Naive thymus-derived CD4-positive, alpha-beta T cell (primary cell): ENCODE measurements at regions of chr7 and their contacts with region 1.

Region 1: GRCh38 chr7:114026486-114027089 is 107.8 kb upstream of the PPP1R3A start:
- DNase-seq: peak in 7 of 9 donors; percentile 10 to 60 (median 44)
- ATAC-seq: peak; percentile 54
- H3K4me3 ChIP-seq: no peak overlapping the region
- H3K4me3 Mint-ChIP-seq: no peak overlapping the region
- H3K27ac ChIP-seq: no peak overlapping the region
- H3K27ac Mint-ChIP-seq: no peak overlapping the region
- H3K4me1 ChIP-seq: no peaks in the 10 kb centered on the region
- H3K4me1 Mint-ChIP-seq: no peaks in the 10 kb centered on the region
- H3K27me3 ChIP-seq: peaks cover 0 to 4% of the 10 kb centered on the region in 2 donors
- H3K27me3 Mint-ChIP-seq: peaks cover 0 to 9% (median 0%) of the 10 kb centered on the region in 5 donors

Region 2: GRCh38 chr7:114663502-114663901 is 636.9 kb after region 1 on chr7:
- CTCF ChIA-PET with region 1: no interaction called
- POLR2A ChIA-PET with region 1: no interaction called
- intact Hi-C with region 1: loop called in 1 of 2 experiments (anchors 10 kb)
- DNase-seq: no peak
- ATAC-seq: no peak
- H3K4me3 ChIP-seq: no peak overlapping the region
- H3K4me3 Mint-ChIP-seq: no peak overlapping the region
- H3K27ac ChIP-seq: no peak overlapping the region
- H3K27ac Mint-ChIP-seq: no peak overlapping the region
- H3K4me1 ChIP-seq: no peaks in the 10 kb centered on the region
- H3K4me1 Mint-ChIP-seq: no peaks in the 10 kb centered on the region
- H3K27me3 ChIP-seq: no peaks in the 10 kb centered on the region
- H3K27me3 Mint-ChIP-seq: peaks cover 0 to 4% (median 0%) of the 10 kb centered on the region in 5 donors

Region 3: DNA sequence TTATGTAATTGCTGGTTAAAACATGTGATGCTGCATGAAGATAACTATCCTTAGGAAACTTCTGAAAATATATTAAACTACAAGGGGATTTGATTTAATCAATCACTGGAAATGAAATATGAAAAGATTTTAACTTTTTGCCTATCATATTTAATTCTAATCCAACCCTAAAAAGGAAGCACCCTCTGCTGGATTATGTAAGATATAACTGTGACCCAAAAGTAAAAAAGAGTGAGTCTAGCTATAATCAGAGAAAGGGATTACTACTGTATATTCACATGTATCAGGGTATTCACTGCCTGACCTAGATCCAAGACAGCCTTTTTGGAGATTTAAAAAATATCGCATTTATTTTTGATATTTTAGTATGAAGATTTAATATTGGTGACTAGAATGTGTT is 1190.8 kb after region 1 on chr7:
- CTCF ChIA-PET with region 1: no interaction called
- POLR2A ChIA-PET with region 1: no interaction called
- intact Hi-C with region 1: loop called in 1 of 2 experiments (anchors 2 kb)
- DNase-seq: peak in 1 of 9 donors; percentile 21
- ATAC-seq: peak; percentile 41
- H3K4me3 ChIP-seq: no peak overlapping the region
- H3K4me3 Mint-ChIP-seq: no peak overlapping the region
- H3K27ac ChIP-seq: no peak overlapping the region
- H3K27ac Mint-ChIP-seq: no peak overlapping the region
- H3K4me1 ChIP-seq: peaks cover 0 to 11% of the 10 kb centered on the region in 2 donors
- H3K4me1 Mint-ChIP-seq: peaks cover 0 to 11% (median 5%) of the 10 kb centered on the region in 7 donors
- H3K27me3 ChIP-seq: no peaks in the 10 kb centered on the region
- H3K27me3 Mint-ChIP-seq: peaks cover 0 to 10% (median 0%) of the 10 kb centered on the region in 5 donors

Region 4: GRCh38 chr7:115387137-115387536 is 1360.5 kb after region 1 on chr7:
- CTCF ChIA-PET with region 1: no interaction called
- POLR2A ChIA-PET with region 1: no interaction called
- intact Hi-C with region 1: loop called in 1 of 2 experiments (anchors 10 kb)
- DNase-seq: no peak
- ATAC-seq: no peak
- H3K4me3 ChIP-seq: no peak overlapping the region
- H3K4me3 Mint-ChIP-seq: no peak overlapping the region
- H3K27ac ChIP-seq: no peak overlapping the region
- H3K27ac Mint-ChIP-seq: no peak overlapping the region
- H3K4me1 ChIP-seq: no peaks in the 10 kb centered on the region
- H3K4me1 Mint-ChIP-seq: no peaks in the 10 kb centered on the region
- H3K27me3 ChIP-seq: no peaks in the 10 kb centered on the region
- H3K27me3 Mint-ChIP-seq: peaks cover 0 to 13% (median 2%) of the 10 kb centered on the region in 5 donors

Region 5: DNA sequence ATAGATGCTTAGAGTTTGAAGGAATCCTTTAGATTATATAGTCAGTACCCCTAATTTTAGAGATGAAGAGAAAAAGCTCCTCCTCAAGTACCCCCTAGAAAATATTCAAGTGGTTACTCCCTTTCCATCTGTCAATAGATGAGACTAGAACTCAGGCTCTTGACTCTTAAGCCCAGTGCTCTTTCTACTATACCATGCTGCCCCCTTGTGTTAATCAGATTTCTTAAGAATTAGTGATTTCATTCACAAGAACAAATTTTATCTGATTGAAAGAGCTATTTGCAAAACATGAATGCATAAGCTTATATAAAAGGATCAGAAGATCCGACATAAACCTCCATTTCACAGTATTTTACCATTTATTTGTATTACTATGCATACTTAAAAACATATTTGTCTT is 1824.7 kb after region 1 on chr7:
- CTCF ChIA-PET with region 1: no interaction called
- POLR2A ChIA-PET with region 1: no interaction called
- intact Hi-C with region 1: loop called in 1 of 2 experiments (anchors 1 kb)
- DNase-seq: peak in 1 of 9 donors; percentile 2
- ATAC-seq: no peak
- H3K4me3 ChIP-seq: no peak overlapping the region
- H3K4me3 Mint-ChIP-seq: no peak overlapping the region
- H3K27ac ChIP-seq: no peak overlapping the region
- H3K27ac Mint-ChIP-seq: no peak overlapping the region
- H3K4me1 ChIP-seq: no peaks in the 10 kb centered on the region
- H3K4me1 Mint-ChIP-seq: no peaks in the 10 kb centered on the region
- H3K27me3 ChIP-seq: no peaks in the 10 kb centered on the region
- H3K27me3 Mint-ChIP-seq: peaks cover 0 to 12% (median 0%) of the 10 kb centered on the region in 5 donors

Region 6: DNA sequence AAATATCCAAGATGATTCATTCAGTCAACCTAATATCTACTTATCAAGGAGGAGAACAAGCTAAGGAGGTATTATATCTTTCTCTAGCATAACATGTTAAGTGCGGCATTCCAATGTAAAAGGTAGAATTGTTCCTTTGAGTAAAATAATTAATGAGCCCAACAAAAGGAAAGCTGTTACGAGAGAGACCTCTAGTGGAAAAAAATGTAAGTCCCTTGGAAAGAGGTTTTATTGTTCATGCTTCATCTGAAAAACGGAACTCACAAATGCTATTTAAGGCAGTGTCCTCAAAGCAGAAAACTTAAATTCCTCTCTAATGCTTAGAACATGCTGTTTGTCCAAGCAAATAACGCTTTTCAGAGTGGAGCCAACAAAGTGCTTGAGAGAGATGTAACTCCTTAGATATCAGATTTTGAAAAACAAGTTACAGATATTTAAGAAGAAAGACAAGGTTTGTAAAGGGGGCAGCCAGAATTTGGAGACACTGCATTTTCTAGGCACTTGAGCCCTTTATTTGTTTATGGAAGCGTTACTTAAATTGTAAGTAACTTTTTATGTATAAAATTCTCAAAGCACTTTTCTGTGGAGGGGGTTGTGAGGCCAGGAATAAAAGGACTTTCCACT is 1884.1 kb after region 1 on chr7:
- CTCF ChIA-PET with region 1: interaction called, 5 read pairs
- POLR2A ChIA-PET with region 1: no interaction called
- intact Hi-C with region 1: loop called in 1 of 2 experiments (anchors 1 kb)
- DNase-seq: peak in 2 of 9 donors; percentile 2 to 3
- ATAC-seq: no peak
- H3K4me3 ChIP-seq: no peak overlapping the region
- H3K4me3 Mint-ChIP-seq: no peak overlapping the region
- H3K27ac ChIP-seq: no peak overlapping the region
- H3K27ac Mint-ChIP-seq: no peak overlapping the region
- H3K4me1 ChIP-seq: no peaks in the 10 kb centered on the region
- H3K4me1 Mint-ChIP-seq: no peaks in the 10 kb centered on the region
- H3K27me3 ChIP-seq: no peaks in the 10 kb centered on the region
- H3K27me3 Mint-ChIP-seq: peaks cover 0 to 11% (median 3%) of the 10 kb centered on the region in 5 donors